OCI-LY7 (cell line): ENCODE measurements at regions of chr9 and their contacts with region 1.

Region 1: DNA sequence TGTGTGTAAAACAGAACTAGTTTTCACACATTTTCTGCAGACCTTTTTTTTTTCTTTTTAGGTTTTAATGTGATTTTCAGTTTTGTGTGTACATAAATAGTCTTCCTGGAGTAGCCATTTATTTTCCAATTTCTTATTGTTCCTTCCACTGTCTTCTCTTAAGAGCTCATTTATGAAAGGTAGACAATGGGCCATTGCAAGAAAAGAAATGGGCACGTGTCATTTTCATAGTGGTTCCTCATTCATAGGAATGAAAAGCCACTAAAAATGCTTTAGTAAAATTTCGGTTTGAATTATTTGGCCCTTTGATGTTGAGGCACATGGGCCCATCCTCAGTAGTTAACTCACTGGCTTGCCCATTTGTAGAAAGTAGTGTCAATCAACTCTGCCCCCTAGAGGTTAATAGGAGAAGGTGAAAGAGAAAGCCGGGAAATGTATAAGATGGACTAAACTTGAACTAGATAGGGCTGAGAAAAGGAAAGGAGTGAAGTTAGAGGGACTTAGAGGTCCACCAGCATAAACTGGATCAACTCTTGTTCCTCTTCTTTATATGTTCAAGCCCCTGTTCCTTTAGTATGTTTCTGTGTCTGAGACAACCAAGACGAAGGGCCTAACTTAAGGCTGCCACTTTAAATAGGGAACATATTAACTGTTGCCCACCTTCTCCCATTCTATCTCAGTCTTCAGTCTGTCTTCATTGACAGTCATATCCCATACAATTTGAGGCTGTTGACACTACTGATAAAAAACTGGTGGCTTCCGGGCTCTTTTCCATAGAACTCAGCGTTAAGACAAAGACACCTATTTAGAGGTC is 72.6 kb downstream of the SMARCA2 start:
- DNase-seq: peak; percentile 71
- H3K4me3 ChIP-seq: no peak overlapping the region
- H3K27ac ChIP-seq: no peak overlapping the region
- H3K4me1 ChIP-seq: no peaks in the 10 kb centered on the region
- CTCF ChIP-seq: peak; percentile 96

Region 2: GRCh38 chr9:950139-950538 is 1137.6 kb before region 1 on chr9:
- CTCF ChIA-PET with region 1: no interaction called
- POLR2A ChIA-PET with region 1: no interaction called
- intact Hi-C with region 1: no loop called
- DNase-seq: no peak
- H3K4me3 ChIP-seq: no peak overlapping the region
- H3K27ac ChIP-seq: no peak overlapping the region
- H3K4me1 ChIP-seq: no peaks in the 10 kb centered on the region
- CTCF ChIP-seq: no peak

Region 3: GRCh38 chr9:1869843-1870242 is 217.9 kb before region 1 on chr9:
- CTCF ChIA-PET with region 1: no interaction called
- POLR2A ChIA-PET with region 1: no interaction called
- intact Hi-C with region 1: loop called (anchors 10 kb)
- DNase-seq: peak; percentile 22
- H3K4me3 ChIP-seq: no peak overlapping the region
- H3K27ac ChIP-seq: no peak overlapping the region
- H3K4me1 ChIP-seq: no peaks in the 10 kb centered on the region
- CTCF ChIP-seq: peak; percentile 70

Region 4: DNA sequence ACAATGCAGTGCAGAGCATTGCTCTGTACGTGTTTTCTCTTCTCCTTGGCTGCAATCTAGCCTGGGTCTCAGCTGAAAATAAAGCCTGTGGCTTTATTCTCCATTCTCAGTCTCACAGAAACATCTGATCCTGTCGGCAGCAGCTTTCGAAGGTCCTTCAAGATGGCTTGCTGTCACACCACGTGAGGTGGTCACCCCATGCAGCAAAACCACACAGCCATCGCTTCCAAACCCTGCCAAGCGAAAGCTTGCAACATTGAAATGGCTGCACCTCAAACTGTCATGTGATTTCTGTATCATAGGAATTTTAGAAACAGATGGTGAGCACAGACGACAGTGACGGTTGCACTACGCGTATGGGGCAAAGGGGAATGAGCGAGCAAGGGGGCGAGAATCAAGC is 171.1 kb before region 1 on chr9:
- CTCF ChIA-PET with region 1: no interaction called
- POLR2A ChIA-PET with region 1: no interaction called
- intact Hi-C with region 1: no loop called
- DNase-seq: no peak
- H3K4me3 ChIP-seq: no peak overlapping the region
- H3K27ac ChIP-seq: no peak overlapping the region
- H3K4me1 ChIP-seq: no peaks in the 10 kb centered on the region
- CTCF ChIP-seq: no peak

Region 5: DNA sequence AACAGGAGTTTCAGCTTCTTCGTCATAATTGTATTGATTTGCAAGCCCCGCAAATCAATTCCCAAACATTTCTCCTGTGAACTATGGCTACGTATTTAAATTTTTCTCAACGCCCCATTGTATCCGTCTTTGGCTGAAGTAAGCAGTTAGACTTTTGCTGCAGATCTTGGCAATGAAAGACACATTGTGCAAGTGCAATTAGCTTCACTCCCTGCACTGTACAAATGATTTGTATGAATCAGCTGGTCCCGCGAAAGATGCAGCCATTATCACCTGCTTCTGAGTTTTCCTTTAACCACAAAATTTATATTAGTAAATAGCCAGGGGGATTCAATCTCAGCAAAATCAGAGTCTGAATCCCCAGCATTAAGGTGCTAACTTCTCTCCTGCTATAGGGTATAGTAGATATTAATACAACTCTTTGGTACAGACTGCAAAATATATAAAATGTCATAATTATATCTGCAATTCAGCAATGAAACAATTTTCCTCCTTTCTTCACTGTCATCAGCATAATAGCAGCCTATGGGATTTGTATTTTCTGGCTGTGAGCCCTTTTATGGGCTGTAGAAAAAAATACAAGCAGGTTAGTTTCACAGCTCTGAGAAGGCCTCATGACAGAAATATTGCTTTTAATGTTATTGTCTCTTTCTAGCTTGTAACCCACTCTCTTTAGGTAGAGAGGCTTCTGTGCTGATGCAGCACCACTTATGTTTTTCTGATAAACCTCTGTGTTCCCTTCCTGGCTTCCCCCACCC is 141.0 kb before region 1 on chr9:
- CTCF ChIA-PET with region 1: no interaction called
- POLR2A ChIA-PET with region 1: no interaction called
- intact Hi-C with region 1: loop called (anchors 5 kb)
- DNase-seq: no peak
- H3K4me3 ChIP-seq: no peak overlapping the region
- H3K27ac ChIP-seq: no peak overlapping the region
- H3K4me1 ChIP-seq: no peaks in the 10 kb centered on the region
- CTCF ChIP-seq: no peak